Left cardiac atrium (tissue), 4 donors: ENCODE measurements at regions of chr7 and their contacts with region 1.

Region 1: GRCh38 chr7:138002096-138002827 is 376 bp upstream of the CREB3L2 start:
- DNase-seq: peak; percentile 98
- ATAC-seq: peak; percentile 96

Region 2: GRCh38 chr7:137656227-137656849 is 345.9 kb before region 1 on chr7:
- intact Hi-C with region 1: loop called in 1 of 2 experiments (anchors 5 kb)
- DNase-seq: peak; percentile 85
- ATAC-seq: peak; percentile 79 to 85

Region 3: DNA sequence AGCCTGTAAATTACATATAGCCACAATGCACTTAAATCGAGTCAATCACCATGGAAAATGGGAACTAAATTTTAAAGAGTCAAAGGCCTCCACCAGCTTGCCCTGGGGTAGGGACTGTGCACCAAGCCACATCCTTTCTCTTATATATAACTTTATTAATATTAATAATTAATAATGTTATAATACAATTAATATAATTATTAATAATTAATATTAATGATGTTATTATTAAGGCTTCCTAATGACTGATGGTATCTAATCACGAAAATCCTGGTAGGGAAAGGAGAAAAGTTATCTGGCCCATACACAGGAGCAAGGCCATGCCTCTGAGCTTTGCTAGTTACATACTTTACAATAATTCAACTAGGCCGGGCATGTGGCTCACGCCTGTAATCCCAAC is 88.3 kb before region 1 on chr7:
- intact Hi-C with region 1: no loop called
- DNase-seq: no peak
- ATAC-seq: no peak

Region 4: GRCh38 chr7:137943147-137943551 is 59.1 kb before region 1 on chr7:
- intact Hi-C with region 1: no loop called
- DNase-seq: peak; percentile 37
- ATAC-seq: peak; percentile 84 to 89